ENCODE measurements at regions of chr7 and their contacts with region 1.

Region 1: GRCh38 chr7:50467817-50468610 is 17.9 kb upstream of the FIGNL1 start:
- DNase-seq: peak; percentile 61 to 79 (median 76)
- ATAC-seq: peak; percentile 97
- H3K4me3 ChIP-seq: peak overlapping the region; percentile 12
- H3K4me3 Mint-ChIP-seq: peak overlapping the region; percentile 12 to 80 (median 70)
- H3K27ac ChIP-seq: no peak overlapping the region
- H3K27ac Mint-ChIP-seq: peak overlapping the region in 7 of 9 donors; percentile 35 to 88 (median 62)
- H3K4me1 ChIP-seq: no peaks in the 10 kb centered on the region
- H3K4me1 Mint-ChIP-seq: peaks cover 8 to 14% (median 11%) of the 10 kb centered on the region in 7 donors
- H3K27me3 ChIP-seq: no peaks in the 10 kb centered on the region
- H3K27me3 Mint-ChIP-seq: peaks cover 0 to 21% (median 0%) of the 10 kb centered on the region in 5 donors

Region 2: GRCh38 chr7:50142425-50143017 is 325.5 kb before region 1 on chr7:
- CTCF ChIA-PET with region 1: interaction called, 14 read pairs
- POLR2A ChIA-PET with region 1: no interaction called
- intact Hi-C with region 1: loop called (anchors 1 kb)
- DNase-seq: peak in 7 of 9 donors; percentile 43 to 72 (median 62)
- ATAC-seq: peak; percentile 83
- H3K4me3 ChIP-seq: no peak overlapping the region
- H3K4me3 Mint-ChIP-seq: peak overlapping the region in 9 of 10 donors; percentile 13 to 86 (median 64)
- H3K27ac ChIP-seq: peak overlapping the region; percentile 55
- H3K27ac Mint-ChIP-seq: peak overlapping the region in 8 of 9 donors; percentile 16 to 91 (median 62)
- H3K4me1 ChIP-seq: peaks cover 3% of the 10 kb centered on the region in 2 donors
- H3K4me1 Mint-ChIP-seq: peaks cover 0 to 37% (median 12%) of the 10 kb centered on the region in 7 donors
- H3K27me3 ChIP-seq: no peaks in the 10 kb centered on the region
- H3K27me3 Mint-ChIP-seq: peaks cover 0 to 18% (median 0%) of the 10 kb centered on the region in 5 donors

Region 3: GRCh38 chr7:50303894-50304157 is 164.2 kb before region 1 on chr7:
- CTCF ChIA-PET with region 1: no interaction called
- POLR2A ChIA-PET with region 1: no interaction called
- intact Hi-C with region 1: no loop called
- DNase-seq: peak in 1 of 9 donors; percentile 54
- ATAC-seq: peak; percentile 58
- H3K4me3 ChIP-seq: peak overlapping the region; percentile 84
- H3K4me3 Mint-ChIP-seq: peak overlapping the region in 1 of 10 donors; percentile 97
- H3K27ac ChIP-seq: peak overlapping the region; percentile 90
- H3K27ac Mint-ChIP-seq: no peak overlapping the region
- H3K4me1 ChIP-seq: peaks cover 13 to 33% of the 10 kb centered on the region in 2 donors
- H3K4me1 Mint-ChIP-seq: peaks cover 33 to 53% (median 52%) of the 10 kb centered on the region in 7 donors
- H3K27me3 ChIP-seq: no peaks in the 10 kb centered on the region
- H3K27me3 Mint-ChIP-seq: peaks cover 0 to 3% (median 0%) of the 10 kb centered on the region in 5 donors

Region 4: GRCh38 chr7:50632561-50633413 is 164.8 kb after region 1 on chr7:
- CTCF ChIA-PET with region 1: interaction called, 23 read pairs
- POLR2A ChIA-PET with region 1: no interaction called
- intact Hi-C with region 1: loop called (anchors 1 kb)
- DNase-seq: peak; percentile 27 to 64 (median 52)
- ATAC-seq: peak; percentile 88
- H3K4me3 ChIP-seq: no peak overlapping the region
- H3K4me3 Mint-ChIP-seq: no peak overlapping the region
- H3K27ac ChIP-seq: no peak overlapping the region
- H3K27ac Mint-ChIP-seq: peak overlapping the region in 1 of 9 donors; percentile 29
- H3K4me1 ChIP-seq: no peaks in the 10 kb centered on the region
- H3K4me1 Mint-ChIP-seq: peaks cover 0 to 6% (median 0%) of the 10 kb centered on the region in 7 donors
- H3K27me3 ChIP-seq: no peaks in the 10 kb centered on the region
- H3K27me3 Mint-ChIP-seq: peaks cover 0 to 37% (median 0%) of the 10 kb centered on the region in 5 donors

Region 5: GRCh38 chr7:51067757-51068156 is 599.7 kb after region 1 on chr7:
- CTCF ChIA-PET with region 1: interaction called, 12 read pairs
- POLR2A ChIA-PET with region 1: no interaction called
- intact Hi-C with region 1: no loop called
- DNase-seq: peak in 6 of 9 donors; percentile 32 to 55 (median 44)
- ATAC-seq: peak; percentile 13
- H3K4me3 ChIP-seq: no peak overlapping the region
- H3K4me3 Mint-ChIP-seq: no peak overlapping the region
- H3K27ac ChIP-seq: no peak overlapping the region
- H3K27ac Mint-ChIP-seq: no peak overlapping the region
- H3K4me1 ChIP-seq: no peaks in the 10 kb centered on the region
- H3K4me1 Mint-ChIP-seq: peaks cover 0 to 2% (median 0%) of the 10 kb centered on the region in 7 donors
- H3K27me3 ChIP-seq: no peaks in the 10 kb centered on the region
- H3K27me3 Mint-ChIP-seq: no peaks in the 10 kb centered on the region

Region 6: GRCh38 chr7:51162724-51163329 is 694.8 kb after region 1 on chr7:
- CTCF ChIA-PET with region 1: interaction called, 26 read pairs
- POLR2A ChIA-PET with region 1: no interaction called
- intact Hi-C with region 1: loop called (anchors 1 to 2 kb)
- DNase-seq: peak; percentile 18 to 66 (median 54)
- ATAC-seq: peak; percentile 77
- H3K4me3 ChIP-seq: no peak overlapping the region
- H3K4me3 Mint-ChIP-seq: peak overlapping the region in 2 of 10 donors; percentile 7 to 44
- H3K27ac ChIP-seq: no peak overlapping the region
- H3K27ac Mint-ChIP-seq: no peak overlapping the region
- H3K4me1 ChIP-seq: no peaks in the 10 kb centered on the region
- H3K4me1 Mint-ChIP-seq: peaks cover 0 to 5% (median 5%) of the 10 kb centered on the region in 7 donors
- H3K27me3 ChIP-seq: no peaks in the 10 kb centered on the region
- H3K27me3 Mint-ChIP-seq: peaks cover 21 to 39% (median 32%) of the 10 kb centered on the region in 5 donors

Measured in naive thymus-derived CD4-positive, alpha-beta T cell (primary cell).